ENCODE measurements at regions of chr2 and their contacts with region 1.

Region 1: GRCh38 chr2:196926562-196927375 is at the start of gene PGAP1:
- DNase-seq: peak; percentile 77 to 95 (median 86)
- H3K4me3 ChIP-seq: peak within 1 kb of the TSS; percentile 55 to 94 (median 85)
- H3K27ac ChIP-seq: peak within 1 kb of the TSS; percentile 71 to 98 (median 95)
- H3K27me3 ChIP-seq: no peaks in the 10 kb centered on the region
- CTCF ChIP-seq: peak in 14 of 56 donors; percentile 5 to 40 (median 20)
- total RNA-seq, gene PGAP1: 19.8 to 61.3 (median 33.4) TPM

Region 2: DNA sequence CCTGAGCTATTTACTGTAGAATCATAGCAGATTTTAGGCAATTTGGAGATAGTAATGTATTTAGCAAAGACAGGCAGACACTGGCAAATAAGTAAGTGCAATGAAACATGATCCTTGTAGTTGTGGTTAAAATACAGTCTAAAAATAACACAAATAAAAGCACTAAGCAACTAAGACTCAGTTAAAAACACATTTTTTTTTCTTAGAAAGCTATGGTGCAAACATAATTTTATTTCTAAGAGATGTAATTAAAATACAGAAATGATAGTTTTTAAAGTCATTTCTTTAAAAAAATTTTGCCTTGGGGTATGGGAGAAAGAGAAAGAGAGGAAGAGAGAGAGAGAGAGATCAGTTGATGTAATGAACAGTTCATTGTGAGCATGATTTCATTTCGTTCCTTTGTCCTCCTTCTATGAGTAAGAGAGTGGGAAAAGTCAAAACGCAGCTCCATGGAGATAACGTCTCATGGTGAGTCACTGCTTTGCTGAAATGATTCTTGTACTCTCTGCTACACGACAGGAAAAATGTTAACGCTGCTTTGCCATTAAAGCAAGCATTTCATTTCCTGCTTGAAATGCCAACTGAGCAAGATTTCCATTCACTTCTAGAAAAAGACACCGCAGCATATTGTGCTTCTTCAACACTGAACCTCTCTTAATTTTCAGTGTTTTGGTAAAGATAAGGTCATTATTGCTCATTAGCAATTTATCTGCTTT is 61.0 kb after region 1 on chr2:
- intact Hi-C with region 1: loop called (anchors 5 kb)
- DNase-seq: peak in 1 of 10 donors; percentile 43
- H3K4me3 ChIP-seq: peak overlapping the region in 48 of 59 donors; percentile 2 to 52 (median 26)
- H3K27ac ChIP-seq: peak overlapping the region in 56 of 59 donors; percentile 1 to 85 (median 60)
- H3K27me3 ChIP-seq: no peaks in the 10 kb centered on the region
- CTCF ChIP-seq: no peak

Region 3: GRCh38 chr2:197075759-197076337 is 149.1 kb after region 1 on chr2:
- intact Hi-C with region 1: loop called in 1 of 2 experiments (anchors 10 kb)
- DNase-seq: no peak
- H3K4me3 ChIP-seq: no peak overlapping the region
- H3K27ac ChIP-seq: peak overlapping the region in 54 of 59 donors; percentile 13 to 97 (median 92)
- H3K27me3 ChIP-seq: no peaks in the 10 kb centered on the region
- CTCF ChIP-seq: peak in 24 of 56 donors; percentile 10 to 39 (median 18)

Region 4: GRCh38 chr2:197310271-197310985 is 383.7 kb after region 1 on chr2 and contains the start of gene ANKRD44:
- intact Hi-C with region 1: loop called (anchors 2 to 10 kb)
- DNase-seq: peak; percentile 79 to 94 (median 90)
- H3K4me3 ChIP-seq: peak within 1 kb of the TSS; percentile 59 to 92 (median 78)
- H3K27ac ChIP-seq: peak within 1 kb of the TSS; percentile 57 to 95 (median 87)
- H3K27me3 ChIP-seq: no peaks in the 10 kb centered on the region
- CTCF ChIP-seq: peak in 49 of 56 donors; percentile 23 to 69 (median 51)
- total RNA-seq, gene ANKRD44: 20.2 to 68.1 (median 34.7) TPM

Region 5: DNA sequence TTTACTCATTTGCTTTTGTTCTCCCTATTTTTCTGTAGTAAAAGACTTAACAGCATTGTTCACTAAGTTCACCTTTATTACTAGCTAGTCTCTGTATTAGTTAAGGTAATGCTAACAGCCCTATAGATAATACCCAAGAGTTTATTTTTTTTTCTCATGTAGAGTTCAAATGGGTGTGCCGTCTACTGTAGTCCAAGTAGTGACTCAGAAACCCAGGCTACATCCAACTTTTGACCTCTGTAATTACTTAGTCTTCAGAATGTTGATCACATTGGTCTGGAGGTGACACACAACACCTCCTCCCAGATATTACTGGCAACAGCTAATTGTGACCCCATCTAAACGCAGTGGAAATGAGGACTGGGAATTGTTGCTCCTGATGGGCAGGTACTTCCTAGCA is 534.3 kb after region 1 on chr2:
- intact Hi-C with region 1: no loop called
- DNase-seq: no peak
- H3K4me3 ChIP-seq: no peak overlapping the region
- H3K27ac ChIP-seq: no peak overlapping the region
- H3K27me3 ChIP-seq: no peaks in the 10 kb centered on the region
- CTCF ChIP-seq: no peak

Measured in dorsolateral prefrontal cortex (tissue), 120 donors.